Activated CD8-positive, alpha-beta T cell treated with anti-CD3 and anti-CD28 coated beads, Interleukin-2, amount 10 ng/mL, durations not matched to agents 7 days and 5 days (primary cell): ENCODE measurements at regions of chr7 and their contacts with region 1.

Region 1: DNA sequence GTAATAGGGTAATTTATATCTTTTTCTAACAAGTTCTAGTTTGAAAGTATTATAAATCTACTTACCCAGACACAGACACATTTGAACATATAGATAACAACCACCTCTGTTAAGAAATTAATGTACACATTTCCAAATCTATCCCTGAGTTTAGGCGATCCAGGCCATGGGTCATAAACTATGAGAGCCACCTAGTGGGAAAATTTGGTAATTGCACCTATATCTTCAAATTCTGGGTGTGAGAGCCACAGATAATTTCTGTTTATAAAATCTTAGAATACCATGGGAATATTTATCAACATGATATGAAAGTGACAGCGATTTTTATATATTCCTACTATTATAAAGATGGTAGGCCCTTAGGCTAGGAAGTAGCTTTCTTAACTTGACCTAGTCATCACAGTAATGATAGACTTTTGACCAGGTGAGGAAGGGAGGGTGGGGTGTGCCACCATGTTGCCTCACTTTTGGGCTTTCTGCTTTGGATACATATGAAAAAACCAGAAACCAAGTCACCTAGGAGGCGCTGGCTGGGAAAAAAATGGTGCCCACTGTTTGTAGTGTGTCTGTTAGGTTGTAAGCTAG is 8.0 kb upstream of the EPHA1 start:
- DNase-seq: no peak
- ATAC-seq: peak; percentile 57
- H3K4me3 Mint-ChIP-seq: no peak overlapping the region
- H3K27ac Mint-ChIP-seq: no peak overlapping the region
- H3K4me1 Mint-ChIP-seq: no peaks in the 10 kb centered on the region
- H3K27me3 Mint-ChIP-seq: no peaks in the 10 kb centered on the region

Region 2: GRCh38 chr7:143299840-143300239 is 116.8 kb before region 1 on chr7:
- CTCF ChIA-PET with region 1: interaction called, 12 read pairs
- POLR2A ChIA-PET with region 1: interaction called, 3 read pairs
- DNase-seq: peak; percentile 71
- ATAC-seq: peak; percentile 87
- H3K4me3 Mint-ChIP-seq: no peak overlapping the region
- H3K27ac Mint-ChIP-seq: no peak overlapping the region
- H3K4me1 Mint-ChIP-seq: peaks cover 52% of the 10 kb centered on the region
- H3K27me3 Mint-ChIP-seq: no peaks in the 10 kb centered on the region

Region 3: GRCh38 chr7:143345428-143345900 is 71.2 kb before region 1 on chr7:
- CTCF ChIA-PET with region 1: interaction called, 11 read pairs
- POLR2A ChIA-PET with region 1: no interaction called
- DNase-seq: peak; percentile 76
- ATAC-seq: peak; percentile 100
- H3K4me3 Mint-ChIP-seq: peak overlapping the region; percentile 65
- H3K27ac Mint-ChIP-seq: peak overlapping the region; percentile 53
- H3K4me1 Mint-ChIP-seq: peaks cover 9% of the 10 kb centered on the region
- H3K27me3 Mint-ChIP-seq: peaks cover 36% of the 10 kb centered on the region

Region 4: GRCh38 chr7:143387156-143387975 is 29.3 kb before region 1 on chr7:
- CTCF ChIA-PET with region 1: interaction called, 10 read pairs
- POLR2A ChIA-PET with region 1: no interaction called
- DNase-seq: no peak
- ATAC-seq: no peak
- H3K4me3 Mint-ChIP-seq: no peak overlapping the region
- H3K27ac Mint-ChIP-seq: no peak overlapping the region
- H3K4me1 Mint-ChIP-seq: peaks cover 26% of the 10 kb centered on the region
- H3K27me3 Mint-ChIP-seq: no peaks in the 10 kb centered on the region